ENCODE measurements at regions of chr1 and their contacts with region 1.

Region 1: DNA sequence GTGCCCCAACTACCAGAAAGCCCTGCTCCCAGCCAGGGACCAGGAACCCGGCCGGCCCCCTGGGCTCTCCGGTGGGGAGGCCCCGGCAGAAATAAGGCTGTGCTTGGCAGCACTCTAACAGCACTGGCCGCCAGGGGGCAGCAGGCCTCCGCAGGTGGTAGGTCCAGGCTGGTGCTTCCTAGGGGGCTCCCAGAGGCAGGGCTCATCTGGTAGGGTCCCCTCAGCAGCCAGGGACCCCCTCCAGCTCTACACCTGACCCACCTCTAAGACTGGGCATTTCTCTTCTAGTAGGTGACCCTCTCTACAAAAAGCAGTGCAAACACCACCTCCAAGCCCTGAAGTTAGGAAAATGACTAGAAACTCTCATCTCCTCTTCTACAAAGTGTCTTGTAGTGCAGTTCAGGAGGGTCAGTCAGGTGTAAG is 85.6 kb downstream of the STUM start:
- DNase-seq: peak; percentile 91
- H3K4me3 ChIP-seq: peak overlapping the region in 1 of 2 experiments; percentile 33; a peak in 1 of 4 replicates
- H3K27ac ChIP-seq: no peak overlapping the region
- H3K4me1 ChIP-seq: no peaks in the 10 kb centered on the region; a peak in 1 of 4 replicates
- H3K27me3 ChIP-seq: no peaks in the 10 kb centered on the region
- CTCF ChIP-seq: peak; percentile 97
- EP300 ChIP-seq: no peak
- RAD21 ChIP-seq: peak; percentile 94

Region 2: GRCh38 chr1:226457307-226457712 is 176.9 kb before region 1 on chr1:
- CTCF ChIA-PET with region 1: no interaction called
- POLR2A ChIA-PET with region 1: no interaction called
- DNase-seq: no peak
- H3K4me3 ChIP-seq: no peak overlapping the region
- H3K27ac ChIP-seq: no peak overlapping the region
- H3K4me1 ChIP-seq: no peaks in the 10 kb centered on the region
- H3K27me3 ChIP-seq: no peaks in the 10 kb centered on the region; the same call in 1 of the 2 replicates
- CTCF ChIP-seq: 0 out of 2 replicates have a peak, but pooled peaks have one; percentile 12
- EP300 ChIP-seq: no peak
- RAD21 ChIP-seq: no peak

Region 3: DNA sequence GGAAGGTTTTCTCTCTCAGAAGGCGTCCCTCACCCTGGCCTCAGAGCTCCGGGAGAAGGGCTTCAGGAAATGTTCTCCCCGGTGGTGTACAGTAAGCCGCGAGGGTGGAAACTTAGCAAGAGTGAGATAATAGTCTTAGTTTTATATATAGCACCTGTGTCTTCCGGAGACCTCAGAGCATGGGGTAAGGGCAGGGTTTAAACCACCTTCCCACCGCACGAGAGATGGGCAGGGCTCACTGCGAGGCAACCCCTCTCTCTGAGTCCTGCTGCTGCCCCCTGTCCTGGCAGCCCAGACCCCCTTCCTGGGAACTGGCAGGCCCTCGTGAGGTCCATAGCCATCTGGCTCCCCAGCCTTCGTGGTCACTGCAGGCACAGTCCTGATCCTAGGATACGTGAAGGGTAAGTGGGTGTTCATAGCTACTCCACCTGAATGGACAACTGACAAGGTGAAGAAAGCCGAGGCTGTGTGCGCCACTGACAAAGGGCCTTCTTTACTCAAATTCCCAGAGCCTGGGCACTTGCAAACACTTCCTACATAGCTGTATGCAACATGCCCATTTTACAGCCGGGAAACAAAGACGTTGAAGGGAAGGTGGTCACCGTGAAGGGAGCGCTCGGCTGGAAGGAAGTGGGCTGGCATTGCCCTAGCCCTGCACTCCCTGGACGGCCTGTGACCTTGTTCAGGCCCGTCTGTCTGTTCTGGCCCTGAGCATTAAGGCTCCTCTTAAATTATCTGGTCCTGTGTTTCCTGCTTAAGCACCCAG is 78.0 kb after region 1 on chr1:
- CTCF ChIA-PET with region 1: interaction called, 10 read pairs
- POLR2A ChIA-PET with region 1: no interaction called
- DNase-seq: no peak
- H3K4me3 ChIP-seq: no peak overlapping the region
- H3K27ac ChIP-seq: no peak overlapping the region
- H3K4me1 ChIP-seq: peaks cover 5 to 9% of the 10 kb centered on the region in 2 experiments; a peak in 2 of 4 replicates
- H3K27me3 ChIP-seq: no peaks in the 10 kb centered on the region
- CTCF ChIP-seq: no peak
- EP300 ChIP-seq: no peak
- RAD21 ChIP-seq: no peak

Region 4: GRCh38 chr1:226754793-226755533 is 120.8 kb after region 1 on chr1:
- CTCF ChIA-PET with region 1: no interaction called
- POLR2A ChIA-PET with region 1: no interaction called
- DNase-seq: no peak
- H3K4me3 ChIP-seq: no peak overlapping the region
- H3K27ac ChIP-seq: no peak overlapping the region
- H3K4me1 ChIP-seq: no peaks in the 10 kb centered on the region
- H3K27me3 ChIP-seq: no peaks in the 10 kb centered on the region; the same call in 1 of the 2 replicates
- CTCF ChIP-seq: no peak
- EP300 ChIP-seq: no peak
- RAD21 ChIP-seq: no peak

Region 5: GRCh38 chr1:226814751-226815496 is 180.7 kb after region 1 on chr1:
- CTCF ChIA-PET with region 1: interaction called, 16 read pairs
- POLR2A ChIA-PET with region 1: no interaction called
- DNase-seq: no peak
- H3K4me3 ChIP-seq: no peak overlapping the region
- H3K27ac ChIP-seq: peak overlapping the region in 1 of 2 experiments; percentile 44; a peak in 2 of 4 replicates
- H3K4me1 ChIP-seq: peaks cover 0 to 4% of the 10 kb centered on the region in 2 experiments; a peak in 1 of 4 replicates
- H3K27me3 ChIP-seq: no peaks in the 10 kb centered on the region
- CTCF ChIP-seq: no peak
- EP300 ChIP-seq: peak in 1 of 2 experiments; percentile 30; a peak in 1 of 4 replicates
- RAD21 ChIP-seq: no peak

Region 6: DNA sequence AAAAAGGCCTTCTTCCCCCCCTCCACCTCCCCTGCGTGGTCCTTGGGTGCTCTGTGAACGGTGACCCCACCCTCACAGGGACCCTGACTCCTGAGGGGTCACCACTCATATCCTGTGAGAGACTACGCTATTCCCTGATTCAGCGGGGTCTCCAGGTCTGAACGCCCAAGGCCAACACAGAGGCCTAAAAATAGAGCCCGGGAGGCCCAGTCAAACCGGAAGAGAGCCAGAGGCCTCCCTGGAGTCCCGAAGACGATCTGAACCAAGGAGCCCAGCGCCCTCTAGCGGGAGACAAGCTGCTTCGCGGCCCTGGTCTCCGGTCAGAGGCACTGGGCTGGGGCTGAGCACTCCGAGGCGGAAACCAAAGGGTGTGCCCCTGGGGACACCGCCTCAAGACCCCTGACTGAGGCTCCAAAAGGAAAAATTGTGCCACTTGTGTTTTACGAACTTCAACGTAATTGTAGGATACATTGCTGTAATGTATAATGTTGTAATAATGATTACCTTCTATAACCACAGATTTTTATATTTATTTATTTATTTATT is 193.9 kb after region 1 on chr1:
- CTCF ChIA-PET with region 1: interaction called, 120 read pairs
- POLR2A ChIA-PET with region 1: interaction called, 3 read pairs
- DNase-seq: peak; percentile 88
- H3K4me3 ChIP-seq: peak overlapping the region in 1 of 2 experiments; percentile 16; a peak in 1 of 4 replicates
- H3K27ac ChIP-seq: no peak overlapping the region
- H3K4me1 ChIP-seq: peaks cover 0 to 2% of the 10 kb centered on the region in 2 experiments; a peak in 1 of 4 replicates
- H3K27me3 ChIP-seq: no peaks in the 10 kb centered on the region; the same call in 1 of the 2 replicates
- CTCF ChIP-seq: peak; percentile 92
- EP300 ChIP-seq: no peak
- RAD21 ChIP-seq: peak; percentile 93